Right cardiac atrium (tissue), 5 donors: ENCODE measurements at regions of chr22 and their contacts with region 1.

Region 1: GRCh38 chr22:25172153-25172552 is 27.5 kb upstream of the CRYBB3 start:
- DNase-seq: peak in 1 of 3 donors; percentile 59
- ATAC-seq: peak; percentile 47 to 67
- H3K4me3 ChIP-seq: no peak overlapping the region
- H3K27ac ChIP-seq: no peak overlapping the region
- H3K4me1 ChIP-seq: no peaks in the 10 kb centered on the region
- H3K27me3 ChIP-seq: no peaks in the 10 kb centered on the region

Region 2: GRCh38 chr22:25081409-25081824 is 90.7 kb before region 1 on chr22:
- intact Hi-C with region 1: loop called in 2 of 4 experiments (anchors 2 to 5 kb)
- DNase-seq: peak in 1 of 3 donors; percentile 65
- ATAC-seq: peak; percentile 37
- H3K4me3 ChIP-seq: no peak overlapping the region
- H3K27ac ChIP-seq: no peak overlapping the region
- H3K4me1 ChIP-seq: peaks cover 3% of the 10 kb centered on the region
- H3K27me3 ChIP-seq: no peaks in the 10 kb centered on the region

Region 3: DNA sequence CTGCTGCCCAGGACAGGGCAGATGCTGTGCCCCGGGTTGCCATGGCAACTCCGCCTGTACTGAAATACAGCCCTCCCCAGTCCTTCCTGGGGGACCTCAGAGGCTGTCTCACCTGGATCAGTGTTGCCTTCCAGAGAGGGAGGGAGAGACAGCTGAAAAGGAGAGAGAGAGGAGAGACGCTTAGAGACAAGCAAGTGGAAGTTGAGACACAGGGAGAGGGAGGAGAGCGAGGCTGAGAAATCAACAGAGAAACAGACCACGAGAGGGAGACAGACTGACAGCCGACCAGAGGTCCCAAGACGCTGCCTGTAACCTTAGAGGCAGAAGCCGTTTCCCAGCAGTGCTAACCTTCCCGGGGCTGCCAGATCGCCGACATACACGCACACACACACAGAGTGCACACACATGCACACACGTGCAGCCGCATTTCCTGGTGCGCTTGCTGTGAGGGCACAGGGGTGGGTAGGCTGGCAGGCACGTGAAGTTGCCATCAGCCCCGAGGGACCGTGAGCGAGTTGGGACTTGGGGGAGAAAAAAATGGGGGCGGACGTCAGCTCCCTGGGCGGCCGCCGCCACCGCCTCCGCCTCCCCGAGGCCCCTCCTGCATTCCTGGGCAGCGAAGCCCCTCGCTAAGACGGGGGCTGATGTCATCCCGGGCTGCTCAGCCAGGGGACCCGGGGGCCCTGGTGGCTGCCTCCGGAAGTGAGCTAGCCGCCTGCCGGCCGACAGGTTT is 61.1 kb before region 1 on chr22:
- intact Hi-C with region 1: loop called in 1 of 4 experiments (anchors 5 kb)
- DNase-seq: peak; percentile 62 to 83 (median 81)
- ATAC-seq: peak; percentile 88
- H3K4me3 ChIP-seq: peak overlapping the region; percentile 59
- H3K27ac ChIP-seq: peak overlapping the region; percentile 55
- H3K4me1 ChIP-seq: peaks cover 7% of the 10 kb centered on the region
- H3K27me3 ChIP-seq: no peaks in the 10 kb centered on the region